Posterior vena cava (tissue), 2 donors: ENCODE measurements at regions of chr14 and their contacts with region 1.

Region 1: DNA sequence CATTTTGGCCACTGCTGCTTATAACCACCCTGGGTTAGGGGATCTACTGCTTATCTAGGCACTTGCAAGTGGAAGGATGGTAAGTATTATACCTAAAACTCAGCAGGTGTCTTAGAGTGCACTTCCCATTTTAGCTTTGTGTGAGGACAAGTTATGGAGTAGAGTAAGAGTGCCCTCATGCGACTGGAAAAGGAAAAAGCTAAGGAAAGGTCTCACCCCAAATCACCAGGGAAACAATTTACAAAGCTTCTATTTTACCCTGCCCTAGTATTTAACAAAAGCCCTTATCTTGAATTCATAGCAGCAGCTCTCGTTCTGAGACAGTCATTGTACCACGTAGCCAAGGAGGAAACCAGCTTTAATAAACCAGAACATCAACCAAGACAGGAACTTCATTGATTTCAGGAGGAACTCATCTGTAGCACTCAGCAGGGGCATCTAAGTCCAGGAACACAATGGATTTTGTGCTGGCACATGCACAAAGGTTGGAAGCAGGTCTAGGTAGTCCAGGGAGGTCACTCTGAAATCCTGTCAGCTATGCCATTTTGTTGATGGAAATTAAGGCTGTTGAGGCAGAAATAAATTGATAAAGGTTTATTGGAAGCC is 2.9 kb downstream of the RDH12 start:
- DNase-seq: no peak

Region 2: GRCh38 chr14:66572836-66573235 is 1131.8 kb before region 1 on chr14:
- intact Hi-C with region 1: no loop called
- DNase-seq: no peak

Region 3: GRCh38 chr14:67583711-67584644 is 120.6 kb before region 1 on chr14:
- intact Hi-C with region 1: loop called in 1 of 2 experiments (anchors 10 kb)
- DNase-seq: no peak

Region 4: DNA sequence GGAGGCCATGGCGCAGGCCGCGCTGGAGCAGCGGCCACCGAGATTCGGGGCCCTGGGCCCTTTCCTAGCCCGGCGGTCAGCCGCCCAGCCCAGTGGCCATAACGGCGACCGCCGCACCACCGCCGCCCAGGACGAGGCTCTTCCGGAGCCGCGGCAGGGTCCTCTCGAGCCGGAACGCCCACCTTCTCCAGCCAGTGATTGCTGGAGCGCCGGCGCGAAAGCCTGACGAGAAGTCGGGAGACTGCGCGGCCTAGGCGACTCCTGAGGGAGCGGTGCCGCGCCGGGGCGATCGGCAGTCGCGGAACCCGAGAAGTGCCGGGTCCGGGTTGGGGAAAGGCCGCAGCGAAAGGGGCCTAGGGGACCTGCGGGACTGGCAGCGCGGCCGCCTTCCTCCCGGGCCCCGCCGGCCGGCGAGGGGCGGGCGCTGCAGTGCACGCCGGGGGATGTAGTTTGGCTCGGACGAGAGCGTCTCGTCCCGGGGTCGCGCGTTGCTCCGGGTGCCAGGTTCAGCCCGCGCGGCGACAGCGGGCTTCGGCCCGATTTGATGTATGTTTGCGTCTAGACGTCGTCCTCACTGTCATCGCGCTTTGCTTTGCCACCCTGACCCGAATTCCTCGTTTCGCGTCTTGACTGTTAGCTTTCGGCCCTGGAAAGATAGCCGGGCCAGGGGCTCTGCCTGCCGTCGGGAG is 30.0 kb before region 1 on chr14 and contains the start of gene VTI1B:
- intact Hi-C with region 1: no loop called
- DNase-seq: peak; percentile 94
- total RNA-seq, gene VTI1B: 111 to 117 TPM